Posterior vena cava (tissue), 2 donors: ENCODE measurements at regions of chr1 and their contacts with region 1.

Region 1: DNA sequence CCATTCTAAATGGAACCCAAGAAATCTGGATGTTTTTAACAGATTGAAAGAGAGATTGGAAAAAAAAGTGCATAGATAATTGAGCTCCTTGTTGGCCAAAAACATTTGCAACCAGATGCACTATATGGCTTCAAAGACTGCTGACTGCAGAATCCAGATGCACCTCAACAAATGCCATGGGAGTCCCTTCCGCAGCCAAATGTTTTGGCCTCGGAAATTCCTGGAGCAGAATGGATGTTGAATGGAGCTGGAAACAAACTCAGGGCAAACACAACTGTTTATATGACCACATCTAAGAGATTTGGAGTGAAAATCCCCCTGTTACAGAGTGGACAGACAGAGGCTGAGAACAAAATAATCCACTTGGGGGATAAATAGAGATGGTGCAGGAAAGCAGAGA is 285.0 kb upstream of the NFIA start:
- DNase-seq: no peak

Region 2: DNA sequence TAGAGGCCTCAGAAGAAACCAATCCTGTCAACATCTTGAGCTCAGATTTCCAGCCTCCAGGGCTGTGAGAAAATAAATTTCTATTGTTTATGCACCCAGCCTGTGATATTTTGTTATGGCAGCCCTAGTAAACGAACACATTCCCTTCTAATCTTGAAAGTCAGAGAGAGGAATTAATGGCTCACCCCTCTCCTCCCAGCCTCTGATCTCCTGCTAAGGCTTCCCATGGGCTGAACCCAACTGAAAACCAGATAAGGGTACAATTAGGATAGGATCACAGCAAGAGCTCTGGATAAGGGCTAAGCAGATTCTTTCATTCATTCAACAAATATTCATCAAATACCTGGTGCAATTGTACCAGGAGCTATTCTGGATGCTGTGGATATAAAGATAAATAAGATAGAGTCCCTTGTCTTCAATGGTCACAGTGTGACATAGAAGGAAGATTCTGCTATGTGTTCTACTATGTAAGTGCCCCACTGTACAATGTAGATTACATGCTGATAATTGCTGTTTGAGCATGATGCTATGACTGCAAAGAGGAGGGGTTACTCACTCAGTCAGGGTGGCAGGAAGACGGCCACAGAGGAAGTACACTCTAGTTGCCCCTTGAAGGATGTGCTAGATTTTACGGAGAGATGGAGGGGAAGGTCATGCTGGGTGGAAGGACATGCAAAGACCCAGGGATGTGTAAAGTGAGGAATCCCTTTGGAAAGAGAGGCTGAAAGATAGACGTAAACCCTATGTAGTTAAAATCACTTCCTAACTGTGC is 1810.2 kb before region 1 on chr1:
- intact Hi-C with region 1: loop called in 1 of 2 experiments (anchors 5 kb)
- DNase-seq: no peak